Heart right ventricle (tissue), 16 donors: ENCODE measurements at regions of chr16 and their contacts with region 1.

Region 1: GRCh38 chr16:84754353-84754856 is 54.6 kb downstream of the USP10 start:
- DNase-seq: peak in 1 of 2 donors; percentile 78
- ATAC-seq: peak; percentile 60 to 78 (median 73)
- H3K4me3 ChIP-seq: peak overlapping the region in 1 of 10 donors; percentile 15
- H3K27ac ChIP-seq: peak overlapping the region in 1 of 10 donors; percentile 67
- H3K4me1 ChIP-seq: peaks cover 0 to 78% (median 28%) of the 10 kb centered on the region in 9 donors
- H3K27me3 ChIP-seq: no peaks in the 10 kb centered on the region
- CTCF ChIP-seq: peak; percentile 64 to 92 (median 87)

Region 2: DNA sequence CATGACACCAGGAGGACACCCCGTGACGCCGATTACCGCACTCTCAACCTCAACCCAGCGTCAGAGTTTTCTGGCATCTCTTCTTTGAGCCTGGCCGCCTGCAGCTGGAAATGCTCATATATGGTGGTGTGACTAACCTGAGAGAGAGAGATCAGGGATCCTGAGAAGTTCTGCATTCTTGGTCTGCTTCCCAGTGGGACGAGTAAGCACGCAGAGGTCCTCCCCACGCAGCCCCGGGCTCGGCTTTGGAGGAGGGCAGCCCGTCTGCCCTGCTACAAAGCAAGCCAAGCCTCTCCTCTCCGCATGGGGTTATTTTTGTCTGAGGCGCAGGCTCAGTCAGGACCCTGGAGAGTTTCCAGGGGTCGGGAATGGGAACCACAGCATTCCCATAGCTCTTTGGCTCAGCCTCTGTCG is 81.8 kb after region 1 on chr16:
- intact Hi-C with region 1: no loop called
- DNase-seq: peak; percentile 77 to 83
- ATAC-seq: peak; percentile 72 to 93 (median 83)
- H3K4me3 ChIP-seq: peak overlapping the region in 5 of 10 donors; percentile 9 to 27 (median 15)
- H3K27ac ChIP-seq: peak overlapping the region; percentile 49 to 83 (median 75)
- H3K4me1 ChIP-seq: peaks cover 0 to 61% (median 43%) of the 10 kb centered on the region in 9 donors
- H3K27me3 ChIP-seq: peaks cover 0 to 6% (median 0%) of the 10 kb centered on the region in 7 donors
- CTCF ChIP-seq: no peak

Region 3: GRCh38 chr16:84952335-84953189 is 198.2 kb after region 1 on chr16:
- intact Hi-C with region 1: loop called (anchors 1 to 5 kb)
- DNase-seq: peak; percentile 50 to 81
- ATAC-seq: peak; percentile 88 to 94 (median 92)
- H3K4me3 ChIP-seq: no peak overlapping the region
- H3K27ac ChIP-seq: peak overlapping the region in 9 of 10 donors; percentile 10 to 82 (median 54)
- H3K4me1 ChIP-seq: peaks cover 3 to 22% (median 17%) of the 10 kb centered on the region in 9 donors
- H3K27me3 ChIP-seq: no peaks in the 10 kb centered on the region
- CTCF ChIP-seq: peak; percentile 70 to 96 (median 92)